Activated B cell treated with CpG ODN at 0.5 μM for 24 hours (primary cell): ENCODE measurements at regions of chr4 and their contacts with region 1.

Region 1: GRCh38 chr4:173370477-173371291 is at the start of gene SAP30:
- DNase-seq: peak; percentile 84
- ATAC-seq: peak; percentile 86
- H3K4me3 Mint-ChIP-seq: peak within 1 kb of the TSS; percentile 100
- H3K27ac Mint-ChIP-seq: peak within 1 kb of the TSS; percentile 96
- H3K4me1 Mint-ChIP-seq: peaks cover 16% of the 10 kb centered on the region
- H3K27me3 Mint-ChIP-seq: no peaks in the 10 kb centered on the region
- CTCF ChIP-seq: no peak
- total RNA-seq, gene SAP30: 2.1 TPM in 2 replicates

Region 2: DNA sequence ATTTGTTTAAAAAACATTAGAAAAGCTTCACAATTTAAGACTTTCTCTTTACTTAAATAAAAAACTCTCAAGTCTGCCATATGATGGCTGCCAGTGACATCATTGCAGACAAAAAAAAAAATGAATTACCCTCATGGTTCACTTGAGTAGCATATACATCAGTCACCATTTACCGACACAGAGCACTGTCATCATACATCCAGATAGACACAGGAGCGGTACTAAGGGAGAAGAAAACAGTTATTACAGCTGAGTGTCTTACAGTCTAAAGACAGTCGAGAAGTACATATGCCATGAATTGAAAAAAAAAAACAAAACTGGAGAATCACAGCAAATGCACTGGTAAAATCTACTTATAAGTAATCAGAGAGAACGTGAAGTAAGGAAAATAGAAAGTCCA is 607.8 kb before region 1 on chr4:
- CTCF ChIA-PET with region 1: no interaction called
- POLR2A ChIA-PET with region 1: no interaction called
- intact Hi-C with region 1: no loop called
- DNase-seq: no peak
- ATAC-seq: no peak
- H3K4me3 Mint-ChIP-seq: no peak overlapping the region
- H3K27ac Mint-ChIP-seq: no peak overlapping the region
- H3K4me1 Mint-ChIP-seq: no peaks in the 10 kb centered on the region
- H3K27me3 Mint-ChIP-seq: no peaks in the 10 kb centered on the region
- CTCF ChIP-seq: no peak

Region 3: GRCh38 chr4:173168396-173169177 is 202.1 kb before region 1 on chr4 and contains the start of gene GALNT7:
- CTCF ChIA-PET with region 1: no interaction called
- POLR2A ChIA-PET with region 1: interaction called, 21 read pairs
- intact Hi-C with region 1: loop called (anchors 1 kb)
- DNase-seq: peak; percentile 46
- ATAC-seq: peak; percentile 45
- H3K4me3 Mint-ChIP-seq: peak within 1 kb of the TSS; percentile 96
- H3K27ac Mint-ChIP-seq: peak within 1 kb of the TSS; percentile 85
- H3K4me1 Mint-ChIP-seq: peaks cover 39% of the 10 kb centered on the region
- H3K27me3 Mint-ChIP-seq: no peaks in the 10 kb centered on the region
- CTCF ChIP-seq: no peak
- total RNA-seq, gene GALNT7: 15.3 and 16.9 TPM in 2 replicates

Region 4: DNA sequence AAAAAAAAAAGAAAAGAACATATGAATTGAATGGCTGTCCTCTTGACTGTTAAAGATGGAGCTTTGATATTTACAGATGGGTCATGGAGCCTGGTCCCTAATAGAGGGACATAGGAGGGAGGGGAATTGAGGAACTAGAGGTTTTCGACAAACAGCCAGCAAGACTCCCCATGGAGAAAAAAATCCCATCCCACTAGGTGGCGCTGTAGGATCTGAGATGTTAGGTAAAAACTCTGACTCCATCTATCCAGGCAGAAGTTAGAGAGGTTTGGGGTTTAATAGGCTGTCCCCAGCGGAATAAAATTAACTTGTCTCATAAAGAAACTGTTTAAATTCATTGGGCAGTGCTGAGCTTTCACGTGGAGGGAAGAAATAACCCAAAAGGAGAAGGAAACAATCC is 82.4 kb before region 1 on chr4:
- CTCF ChIA-PET with region 1: no interaction called
- POLR2A ChIA-PET with region 1: interaction called, 12 read pairs
- intact Hi-C with region 1: no loop called
- DNase-seq: no peak
- ATAC-seq: peak; percentile 40
- H3K4me3 Mint-ChIP-seq: no peak overlapping the region
- H3K27ac Mint-ChIP-seq: no peak overlapping the region
- H3K4me1 Mint-ChIP-seq: peaks cover 4% of the 10 kb centered on the region
- H3K27me3 Mint-ChIP-seq: no peaks in the 10 kb centered on the region
- CTCF ChIP-seq: no peak

Region 5: DNA sequence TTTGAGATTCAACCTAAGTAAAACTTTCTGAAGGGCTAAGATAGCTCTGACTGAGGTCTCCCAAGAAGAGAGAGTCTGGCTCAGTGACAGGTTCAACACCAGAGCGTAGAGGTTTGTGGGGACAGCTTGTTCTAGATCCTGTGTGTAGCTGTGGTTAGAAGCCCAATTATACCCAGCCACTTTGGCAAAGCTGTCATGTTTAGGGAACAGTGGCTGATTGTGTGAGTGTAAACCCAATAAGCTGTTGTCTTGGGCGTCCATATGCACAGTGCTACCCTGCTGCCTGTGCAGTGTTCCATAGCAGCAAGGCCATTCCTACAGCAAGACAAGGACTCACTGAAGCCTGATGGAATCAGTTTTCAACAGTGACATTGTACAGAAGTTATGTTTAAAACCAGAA is 39.4 kb after region 1 on chr4:
- CTCF ChIA-PET with region 1: no interaction called
- POLR2A ChIA-PET with region 1: no interaction called
- intact Hi-C with region 1: no loop called
- DNase-seq: no peak
- ATAC-seq: no peak
- H3K4me3 Mint-ChIP-seq: no peak overlapping the region
- H3K27ac Mint-ChIP-seq: no peak overlapping the region
- H3K4me1 Mint-ChIP-seq: no peaks in the 10 kb centered on the region
- H3K27me3 Mint-ChIP-seq: no peaks in the 10 kb centered on the region
- CTCF ChIP-seq: no peak

Region 6: DNA sequence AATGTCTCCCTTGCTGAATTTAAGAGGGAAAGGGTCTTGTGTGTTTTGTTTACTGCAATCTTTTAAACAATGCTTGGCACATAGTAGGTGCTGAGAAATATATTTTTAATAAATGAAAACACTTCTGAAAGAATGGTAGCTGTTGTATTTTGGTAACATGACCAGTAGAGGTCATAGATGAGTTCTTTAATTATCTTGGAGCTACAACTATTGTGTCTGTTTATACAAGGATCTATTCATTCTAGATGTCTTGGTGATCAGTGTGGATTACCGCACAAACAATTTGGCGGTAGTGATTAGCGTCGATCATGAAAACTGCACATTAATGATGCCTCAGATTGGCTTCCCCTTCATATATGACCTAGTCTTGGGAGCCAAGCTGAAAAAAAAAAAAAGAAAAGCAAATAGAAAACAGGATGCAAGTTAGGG is 49.7 kb after region 1 on chr4:
- CTCF ChIA-PET with region 1: interaction called, 4 read pairs
- POLR2A ChIA-PET with region 1: interaction called, 3 read pairs
- intact Hi-C with region 1: loop called (anchors 2 kb)
- DNase-seq: no peak
- ATAC-seq: no peak
- H3K4me3 Mint-ChIP-seq: no peak overlapping the region
- H3K27ac Mint-ChIP-seq: no peak overlapping the region
- H3K4me1 Mint-ChIP-seq: peaks cover 3% of the 10 kb centered on the region
- H3K27me3 Mint-ChIP-seq: no peaks in the 10 kb centered on the region
- CTCF ChIP-seq: no peak

Region 7: GRCh38 chr4:174244441-174244840 is 873.8 kb after region 1 on chr4:
- CTCF ChIA-PET with region 1: no interaction called
- POLR2A ChIA-PET with region 1: interaction called, 11 read pairs
- intact Hi-C with region 1: no loop called
- DNase-seq: no peak
- ATAC-seq: no peak
- H3K4me3 Mint-ChIP-seq: no peak overlapping the region
- H3K27ac Mint-ChIP-seq: no peak overlapping the region
- H3K4me1 Mint-ChIP-seq: no peaks in the 10 kb centered on the region
- H3K27me3 Mint-ChIP-seq: no peaks in the 10 kb centered on the region
- CTCF ChIP-seq: no peak